Activated CD4-positive, alpha-beta T cell treated with anti-CD3 and anti-CD28 coated beads, Interleukin-2, amount 10 ng/mL, durations not matched to agents 24 days and 14 days (primary cell): ENCODE measurements at regions of chr19 and their contacts with region 1.

Region 1: DNA sequence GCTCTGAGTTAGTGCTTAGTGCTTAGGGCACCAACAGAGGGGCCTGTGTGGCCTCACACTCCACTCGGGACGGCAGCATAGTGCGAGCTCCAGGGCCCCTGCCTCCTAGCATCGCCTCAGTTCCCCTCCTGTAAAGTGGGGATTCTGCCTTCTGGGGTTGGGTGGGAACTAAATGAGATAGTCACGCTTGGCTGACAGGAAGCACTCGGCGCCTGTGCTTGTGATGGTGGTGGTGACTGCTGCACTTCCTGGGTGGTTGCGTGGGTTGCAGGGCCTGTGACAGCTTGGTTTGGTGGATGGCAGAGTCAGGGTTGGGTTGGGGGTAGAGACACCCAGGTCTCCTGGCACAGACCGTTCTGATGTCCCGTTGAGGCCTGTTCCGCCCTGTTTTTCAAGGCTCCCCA is 7.7 kb downstream of the PLEKHF1 start:
- DNase-seq: peak; percentile 92
- H3K4me3 Mint-ChIP-seq: peak overlapping the region; percentile 95
- H3K27ac Mint-ChIP-seq: peak overlapping the region; percentile 95
- H3K4me1 Mint-ChIP-seq: peaks cover 62% of the 10 kb centered on the region
- H3K27me3 Mint-ChIP-seq: no peaks in the 10 kb centered on the region

Region 2: GRCh38 chr19:29216021-29216420 is 456.9 kb before region 1 on chr19:
- intact Hi-C with region 1: no loop called
- DNase-seq: peak; percentile 44
- H3K4me3 Mint-ChIP-seq: no peak overlapping the region
- H3K27ac Mint-ChIP-seq: no peak overlapping the region
- H3K4me1 Mint-ChIP-seq: peaks cover 22% of the 10 kb centered on the region
- H3K27me3 Mint-ChIP-seq: peaks cover 9% of the 10 kb centered on the region

Region 3: DNA sequence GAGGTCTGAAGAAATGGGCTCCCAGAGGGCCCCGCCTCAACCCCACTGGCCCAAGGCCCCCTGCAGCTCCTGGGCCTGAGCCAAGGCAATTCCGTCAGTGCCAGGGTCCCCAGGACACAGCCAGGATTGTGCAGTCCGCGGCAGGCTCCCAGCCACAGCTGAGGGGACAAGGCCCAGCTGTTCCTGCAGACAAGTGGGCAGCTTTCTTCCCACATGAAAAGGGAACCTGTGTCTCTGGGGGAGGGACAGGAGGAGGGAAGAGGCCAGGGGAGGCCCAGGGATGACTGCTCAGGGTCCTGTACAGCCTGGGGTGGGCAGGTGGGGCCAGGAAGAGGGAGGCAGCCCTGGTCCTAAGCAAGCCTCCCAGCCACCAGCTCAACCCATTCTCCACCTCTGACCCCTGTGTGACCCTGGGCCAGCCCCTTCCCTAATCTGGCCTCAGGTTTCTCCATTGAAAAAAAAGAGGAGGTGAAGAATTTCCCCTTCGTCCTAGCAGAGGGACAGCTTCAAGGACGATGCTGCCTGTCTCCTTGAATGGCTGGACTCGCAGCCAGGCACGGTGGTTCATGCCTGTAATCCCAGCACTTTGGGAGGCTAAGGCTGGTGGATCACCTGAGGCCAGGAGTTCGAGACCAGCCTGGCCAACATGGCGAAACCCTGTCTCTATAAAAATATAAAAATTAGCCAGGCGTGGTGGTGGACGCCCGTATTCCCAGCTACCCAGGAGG is 167.7 kb before region 1 on chr19:
- intact Hi-C with region 1: no loop called
- DNase-seq: no peak
- H3K4me3 Mint-ChIP-seq: no peak overlapping the region
- H3K27ac Mint-ChIP-seq: no peak overlapping the region
- H3K4me1 Mint-ChIP-seq: no peaks in the 10 kb centered on the region
- H3K27me3 Mint-ChIP-seq: no peaks in the 10 kb centered on the region

Region 4: DNA sequence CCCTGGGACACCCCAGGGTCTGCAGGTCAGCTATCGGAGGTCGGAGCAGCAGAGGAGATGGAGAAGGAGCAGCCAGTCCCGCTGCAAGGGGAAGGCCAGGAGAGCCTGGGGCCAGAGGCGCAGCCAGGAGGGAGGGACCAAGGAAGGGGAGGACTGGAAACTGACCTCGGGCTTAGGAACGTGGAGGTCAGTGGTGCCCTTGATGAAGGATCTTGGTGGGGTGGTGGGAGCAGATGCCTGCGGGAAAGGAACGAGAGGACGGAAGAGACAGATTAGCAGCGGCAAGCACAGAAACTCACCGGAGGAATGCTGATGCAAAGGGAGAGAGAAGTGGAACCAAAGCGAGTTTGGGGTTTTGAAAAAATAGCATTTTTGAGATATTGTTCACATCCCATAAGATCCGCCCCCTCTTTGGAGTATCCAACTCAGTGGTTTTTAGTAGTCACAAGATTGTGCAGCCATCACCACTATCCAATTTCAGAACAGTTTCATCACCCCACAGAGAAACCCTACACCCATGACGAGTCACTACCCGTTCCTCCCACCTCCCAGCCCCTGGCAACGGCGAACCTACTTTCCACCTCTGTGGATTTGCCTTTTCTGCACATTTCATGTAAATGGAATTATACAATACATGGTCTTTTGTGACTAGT is 14.4 kb after region 1 on chr19:
- intact Hi-C with region 1: loop called (anchors 1 kb)
- DNase-seq: peak; percentile 65
- H3K4me3 Mint-ChIP-seq: peak overlapping the region; percentile 49
- H3K27ac Mint-ChIP-seq: peak overlapping the region; percentile 90
- H3K4me1 Mint-ChIP-seq: peaks cover 44% of the 10 kb centered on the region
- H3K27me3 Mint-ChIP-seq: no peaks in the 10 kb centered on the region

Region 5: DNA sequence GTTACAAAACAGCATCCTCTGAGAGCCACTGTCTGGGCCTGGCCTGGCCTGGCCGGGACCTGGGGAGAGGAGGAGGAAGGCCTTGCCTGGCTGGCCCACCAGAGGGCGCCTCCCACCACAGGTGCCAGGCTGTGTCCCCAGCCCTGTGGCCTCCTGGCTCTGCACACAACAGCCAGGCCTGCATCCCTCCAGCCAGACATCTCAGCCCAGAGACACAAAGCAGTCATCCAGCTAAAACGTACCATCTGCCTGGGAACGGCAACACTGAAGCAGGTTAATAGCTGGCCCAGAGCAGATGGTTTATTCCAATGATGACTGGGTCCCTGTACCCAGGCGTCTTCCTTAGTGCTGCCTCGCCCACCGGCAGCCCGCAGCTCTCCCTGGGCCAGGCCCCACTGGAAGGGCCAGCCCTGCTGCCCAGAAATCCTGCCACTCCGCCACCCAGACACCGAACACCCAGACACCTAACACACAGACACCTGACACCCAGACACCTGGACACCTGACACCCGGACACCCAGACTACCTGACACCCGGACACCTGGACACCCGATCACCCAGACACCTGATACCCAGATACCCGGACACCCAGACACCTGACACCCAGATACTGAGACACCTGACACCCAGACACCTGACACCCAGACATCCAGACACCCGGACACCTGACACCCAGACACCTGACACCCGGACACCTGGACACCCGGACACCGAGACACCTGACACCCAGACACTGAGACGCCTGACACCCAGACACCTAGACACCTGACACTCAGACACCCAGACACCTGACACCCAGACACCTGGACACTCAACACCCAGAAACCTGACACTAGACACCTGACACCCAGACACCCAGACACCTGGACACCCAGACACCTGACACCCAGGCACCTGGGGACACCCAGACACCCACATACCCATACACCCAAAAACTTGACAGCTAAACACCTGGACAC is 22.0 kb after region 1 on chr19:
- intact Hi-C with region 1: loop called (anchors 1 kb)
- DNase-seq: peak; percentile 95
- H3K4me3 Mint-ChIP-seq: no peak overlapping the region
- H3K27ac Mint-ChIP-seq: peak overlapping the region; percentile 34
- H3K4me1 Mint-ChIP-seq: peaks cover 17% of the 10 kb centered on the region
- H3K27me3 Mint-ChIP-seq: no peaks in the 10 kb centered on the region

Region 6: DNA sequence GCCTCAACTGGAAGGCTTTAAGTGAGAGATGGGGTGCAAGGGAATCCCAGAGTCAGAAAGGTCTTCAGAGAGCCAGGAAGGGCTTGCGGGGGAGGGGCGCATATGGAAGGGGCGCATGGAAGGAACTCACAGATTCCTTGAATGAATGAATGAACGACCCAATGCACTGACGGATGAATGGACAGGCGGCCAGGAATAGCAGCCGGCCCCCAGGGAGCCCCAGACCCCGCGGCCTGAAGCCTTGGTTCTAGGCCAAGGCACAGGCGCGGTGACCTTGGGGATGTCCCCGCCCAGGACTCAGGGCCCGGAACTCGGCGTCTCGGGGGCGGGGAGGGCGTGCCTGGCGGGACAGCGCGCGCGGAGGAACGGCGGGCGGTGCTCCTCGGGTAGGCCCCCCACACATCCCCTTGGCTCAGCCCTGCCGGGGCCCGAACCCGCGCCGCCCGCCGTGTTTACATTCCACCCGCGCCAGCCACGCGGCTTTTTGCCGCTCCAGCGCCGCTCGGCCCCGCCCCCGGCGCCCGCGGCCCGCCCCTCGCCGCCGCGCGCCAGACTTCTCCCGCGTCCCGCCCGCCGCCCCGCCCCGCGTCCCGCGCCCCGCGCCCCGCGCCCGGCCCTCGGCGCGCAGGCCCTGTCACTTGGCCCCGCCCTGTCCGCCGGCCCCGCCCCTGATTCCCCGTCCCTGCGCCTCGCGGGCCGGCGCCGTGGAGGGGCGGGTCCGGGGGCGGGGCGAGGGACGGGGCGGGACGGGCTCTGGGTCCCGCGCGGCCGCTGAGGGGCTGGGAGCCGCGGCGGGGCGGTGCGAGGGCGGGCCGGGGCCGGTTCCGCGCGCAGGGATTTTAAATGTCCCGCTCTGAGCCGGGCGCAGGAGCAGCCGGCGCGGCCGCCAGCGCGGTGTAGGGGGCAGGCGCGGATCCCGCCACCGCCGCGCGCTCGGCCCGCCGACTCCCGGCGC is 138.5 kb after region 1 on chr19 and contains the start of gene CCNE1:
- intact Hi-C with region 1: no loop called
- DNase-seq: peak; percentile 98
- H3K4me3 Mint-ChIP-seq: peak within 1 kb of the TSS; percentile 93
- H3K27ac Mint-ChIP-seq: peak within 1 kb of the TSS; percentile 93
- H3K4me1 Mint-ChIP-seq: peaks cover 27% of the 10 kb centered on the region
- H3K27me3 Mint-ChIP-seq: no peaks in the 10 kb centered on the region
- total RNA-seq, gene CCNE1: 54.5 and 55.8 TPM in 2 replicates